ENCODE measurements at regions of chr3 and their contacts with region 1.

Region 1: DNA sequence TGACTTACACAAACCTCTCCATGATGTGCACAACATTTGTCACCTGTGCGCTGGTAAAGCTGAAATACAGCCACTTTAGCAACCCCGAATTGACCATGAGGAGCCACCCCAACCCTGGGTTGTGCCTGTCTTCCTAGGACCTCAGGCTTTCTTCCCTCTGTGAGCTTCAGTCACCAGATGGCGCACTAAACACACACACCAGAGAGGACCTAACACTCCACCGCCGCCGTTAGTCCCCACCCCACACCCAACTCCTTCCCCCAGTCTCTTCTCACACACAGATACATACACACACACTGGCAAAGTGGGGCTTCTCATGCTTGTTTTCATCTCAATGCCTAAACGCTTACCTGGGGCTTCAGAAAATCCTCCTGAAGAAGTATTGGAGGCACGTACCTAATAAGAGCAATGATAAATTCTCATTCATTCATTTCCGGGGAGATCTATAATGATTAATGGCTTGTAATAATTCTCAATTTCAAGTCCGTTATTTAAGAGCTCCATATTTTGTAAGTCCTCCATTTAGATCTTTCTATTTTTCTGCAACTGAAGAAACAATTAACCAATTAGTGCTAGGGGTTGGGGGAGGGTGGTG is 2.1 kb upstream of the CCDC80 start:
- DNase-seq: peak; percentile 81
- CTCF ChIP-seq: peak; percentile 81

Region 2: DNA sequence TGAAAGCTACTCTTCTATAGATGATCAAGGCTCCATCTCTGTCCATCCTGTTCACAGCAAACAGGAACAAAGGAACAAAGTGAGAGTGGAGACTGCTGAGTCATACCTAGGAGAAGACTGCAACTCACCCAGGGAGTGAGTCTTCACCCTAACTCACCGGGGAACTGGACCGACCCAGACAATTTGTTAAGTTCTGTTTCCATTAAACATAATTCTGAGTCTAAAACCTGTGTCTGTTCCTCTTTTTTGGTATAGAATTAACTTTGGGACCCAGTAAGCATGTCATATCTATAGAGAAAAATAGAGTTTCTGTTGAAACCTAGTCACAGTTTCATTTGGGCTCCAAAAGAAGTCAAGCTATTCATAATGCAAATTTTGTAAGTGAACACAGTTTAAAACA is 23.7 kb before region 1 on chr3:
- CTCF ChIA-PET with region 1: interaction called, 25 read pairs
- POLR2A ChIA-PET with region 1: no interaction called
- DNase-seq: no peak
- CTCF ChIP-seq: no peak

Region 3: DNA sequence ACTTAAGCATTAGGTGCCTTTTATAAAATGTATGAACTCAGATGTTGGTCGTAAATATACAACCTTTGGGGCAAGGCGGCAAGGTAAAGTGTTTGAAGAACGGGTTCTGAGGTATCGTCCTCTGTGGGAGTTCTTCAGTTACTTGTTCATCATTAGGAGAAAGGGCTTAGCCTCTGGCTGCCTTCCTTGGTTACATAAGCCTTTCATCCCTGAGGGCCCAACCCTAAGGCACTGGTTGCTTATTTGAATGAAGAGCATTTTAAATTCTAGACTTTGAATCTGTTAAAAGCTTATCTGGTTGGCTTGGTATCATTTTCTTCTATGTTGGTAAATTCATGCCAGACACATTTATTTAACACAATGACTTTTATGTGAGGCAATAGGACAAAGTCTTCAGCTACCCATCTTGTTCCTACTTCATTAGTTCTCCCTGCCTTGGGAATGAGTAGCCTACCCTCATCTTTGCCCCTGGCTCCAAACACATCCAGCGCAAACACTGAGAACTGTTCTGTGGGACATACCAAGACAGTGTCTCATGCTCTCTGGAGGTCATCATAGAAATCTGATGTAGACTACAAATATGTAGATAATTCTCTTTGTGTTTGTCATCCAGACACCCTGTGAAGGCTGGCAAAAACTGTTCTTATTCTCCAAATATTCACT is 10.3 kb after region 1 on chr3:
- CTCF ChIA-PET with region 1: interaction called, 34 read pairs
- POLR2A ChIA-PET with region 1: no interaction called
- DNase-seq: no peak
- CTCF ChIP-seq: no peak

Region 4: DNA sequence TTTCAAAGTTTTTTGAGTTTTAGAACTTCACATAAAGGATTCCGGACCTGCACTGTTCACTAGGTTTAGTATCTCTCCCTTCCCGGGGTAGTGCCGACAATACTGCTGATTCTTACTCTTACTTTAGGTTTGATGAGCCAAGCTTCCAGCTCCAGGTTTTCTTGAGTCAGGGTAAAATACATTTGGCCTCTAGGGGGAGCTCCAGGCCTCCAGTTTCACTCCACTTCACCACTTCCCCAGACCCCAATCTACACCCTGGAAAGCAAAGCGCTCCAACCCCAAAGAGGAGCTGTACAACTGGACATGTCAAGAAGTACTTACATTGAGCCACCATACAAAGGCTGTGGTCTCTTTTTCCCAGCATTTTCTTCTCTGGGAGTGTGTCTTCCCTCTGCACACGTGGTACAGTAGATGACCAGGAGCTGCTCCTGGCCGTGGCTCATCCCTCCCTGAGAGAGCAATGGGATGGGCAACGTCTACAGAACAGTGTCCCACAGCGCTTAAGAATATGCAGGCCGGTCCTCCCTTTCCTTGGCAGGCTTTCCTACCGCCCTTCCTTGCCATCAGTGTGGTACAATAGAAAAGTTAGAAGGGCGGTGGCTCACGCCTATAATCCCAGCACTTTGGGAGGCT is 91.8 kb after region 1 on chr3:
- CTCF ChIA-PET with region 1: interaction called, 15 read pairs
- POLR2A ChIA-PET with region 1: no interaction called
- DNase-seq: peak; percentile 65
- CTCF ChIP-seq: peak; percentile 51

Region 5: DNA sequence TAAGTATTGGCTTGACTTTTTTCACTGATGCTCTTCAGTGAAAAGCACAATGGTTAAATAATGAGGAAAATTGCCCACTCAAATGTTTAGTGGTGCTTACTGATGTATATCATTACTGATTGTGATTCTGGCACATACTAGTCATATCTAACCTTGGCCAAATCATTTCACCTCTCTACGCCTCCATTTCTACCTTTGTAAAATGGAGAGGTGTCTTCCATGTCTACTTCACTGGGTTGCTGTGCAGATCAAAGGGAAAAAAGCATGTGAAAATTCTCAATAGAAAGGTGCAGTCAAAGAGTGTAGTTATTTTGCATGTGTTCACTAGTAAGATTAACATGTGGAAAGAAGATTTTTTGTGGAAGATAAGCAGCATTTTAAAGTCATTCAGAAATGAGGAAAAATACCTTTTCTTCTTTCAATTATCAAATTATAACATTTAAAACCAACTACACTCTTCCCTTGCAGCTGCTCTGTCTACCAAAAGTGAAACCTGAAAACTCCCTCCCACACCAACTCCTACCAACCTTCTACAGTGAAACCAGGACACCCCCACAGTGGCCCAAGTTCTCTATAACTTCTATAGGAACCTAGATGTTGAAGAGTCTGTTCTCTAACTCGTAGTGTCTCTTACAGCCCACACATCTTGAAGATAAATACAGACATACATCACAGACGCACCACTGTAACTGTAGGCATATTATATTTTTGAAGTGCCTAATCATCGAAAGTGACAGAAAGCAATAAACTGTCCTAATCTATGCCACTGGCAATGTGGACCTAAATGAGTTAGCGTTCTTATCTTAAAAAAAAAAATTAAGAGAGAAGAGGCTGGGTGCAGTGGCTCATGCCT is 330.5 kb after region 1 on chr3:
- CTCF ChIA-PET with region 1: interaction called, 62 read pairs
- POLR2A ChIA-PET with region 1: no interaction called
- DNase-seq: peak; percentile 42
- CTCF ChIP-seq: no peak

Region 6: DNA sequence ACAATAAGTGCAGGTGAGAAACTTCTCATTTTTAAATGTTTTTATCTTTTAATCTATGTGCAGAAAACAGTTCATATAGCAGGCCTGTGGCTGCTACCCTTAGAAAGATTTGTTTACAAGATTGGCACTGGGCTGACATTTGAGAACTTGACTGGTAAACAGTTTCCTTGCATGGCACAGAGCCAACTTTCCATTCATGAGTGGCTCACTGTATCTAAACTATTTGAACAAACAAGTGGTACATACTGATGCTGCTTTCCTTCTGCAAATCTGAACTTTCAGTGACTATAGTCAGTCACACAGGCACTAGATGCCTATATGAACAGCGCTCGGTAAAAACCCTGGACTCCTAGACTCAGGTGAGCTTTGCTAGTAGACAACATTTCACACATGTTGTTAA is 341.5 kb after region 1 on chr3:
- CTCF ChIA-PET with region 1: interaction called, 62 read pairs
- POLR2A ChIA-PET with region 1: no interaction called
- DNase-seq: no peak
- CTCF ChIP-seq: no peak

Region 7: DNA sequence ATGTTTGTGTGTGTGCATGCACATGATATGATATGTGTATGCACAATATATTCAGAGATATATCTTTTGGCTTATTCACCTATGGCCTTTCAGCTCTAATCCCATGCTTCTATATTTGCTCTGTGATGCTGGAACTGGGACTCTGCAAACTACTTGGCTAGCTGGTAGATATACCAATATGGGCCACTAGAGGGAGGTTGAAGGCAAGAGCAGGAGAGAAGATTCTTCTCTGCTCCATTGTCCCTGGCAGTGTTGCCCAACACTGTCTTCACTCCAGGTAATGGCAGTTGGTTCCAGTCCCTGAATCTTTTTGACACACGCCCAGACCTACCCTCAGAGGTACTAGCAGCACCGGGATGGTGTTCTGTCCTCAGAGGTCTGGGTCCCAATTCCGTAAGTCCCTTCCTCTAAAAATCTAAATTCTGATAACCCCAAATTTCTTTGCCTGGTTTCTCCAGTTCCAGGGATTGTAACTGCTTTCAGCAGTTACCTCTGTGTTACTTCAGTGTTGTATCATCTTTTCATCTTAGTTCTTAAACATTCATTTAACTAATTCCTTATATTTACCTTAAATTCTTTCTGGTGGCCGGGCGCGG is 392.5 kb after region 1 on chr3:
- CTCF ChIA-PET with region 1: interaction called, 22 read pairs
- POLR2A ChIA-PET with region 1: no interaction called
- DNase-seq: peak; percentile 68
- CTCF ChIP-seq: peak; percentile 79